Caco-2 (cell line): ENCODE measurements at regions of chr7 and their contacts with region 1.

Region 1: DNA sequence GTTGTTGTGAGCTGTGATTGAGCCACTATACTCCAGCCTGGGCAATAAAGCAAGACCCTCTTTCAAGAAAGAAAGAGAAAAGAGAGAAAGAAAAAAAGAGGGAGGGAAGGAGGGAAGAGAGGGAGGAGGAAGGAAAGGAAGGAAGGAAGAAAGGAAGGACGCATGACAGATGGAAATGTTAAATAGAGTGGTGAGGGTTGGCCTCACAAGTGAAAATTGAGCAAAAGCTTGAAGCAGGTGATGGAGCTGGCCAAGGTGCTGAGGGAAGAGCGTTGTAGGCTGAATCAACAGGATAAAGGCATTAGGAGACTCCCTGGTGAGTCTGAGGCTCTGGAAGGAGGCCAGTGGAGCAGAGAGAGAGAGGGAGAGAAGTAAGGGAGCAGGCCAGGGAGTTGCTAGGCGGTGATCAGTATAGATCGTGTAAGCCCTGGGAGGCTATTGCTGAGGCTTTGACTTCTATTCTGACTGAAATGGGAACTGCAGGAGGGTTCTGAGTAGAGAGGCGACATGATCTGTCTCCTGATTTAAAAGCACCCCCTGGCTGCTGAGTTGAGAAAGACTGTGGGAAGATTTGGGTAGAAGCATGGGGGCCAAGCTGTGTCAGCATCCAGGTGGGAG is 26.5 kb upstream of the TMEM248 start:
- DNase-seq: peak in 1 of 2 experiments; percentile 44
- H3K4me3 ChIP-seq: no peak overlapping the region
- H3K4me3 Mint-ChIP-seq: no peak overlapping the region
- H3K27ac Mint-ChIP-seq: no peak overlapping the region
- H3K4me1 ChIP-seq: no peaks in the 10 kb centered on the region
- H3K4me1 Mint-ChIP-seq: no peaks in the 10 kb centered on the region
- H3K27me3 ChIP-seq: no peaks in the 10 kb centered on the region
- H3K27me3 Mint-ChIP-seq: no peaks in the 10 kb centered on the region
- CTCF ChIP-seq: peak in 1 of 2 experiments; percentile 30

Region 2: DNA sequence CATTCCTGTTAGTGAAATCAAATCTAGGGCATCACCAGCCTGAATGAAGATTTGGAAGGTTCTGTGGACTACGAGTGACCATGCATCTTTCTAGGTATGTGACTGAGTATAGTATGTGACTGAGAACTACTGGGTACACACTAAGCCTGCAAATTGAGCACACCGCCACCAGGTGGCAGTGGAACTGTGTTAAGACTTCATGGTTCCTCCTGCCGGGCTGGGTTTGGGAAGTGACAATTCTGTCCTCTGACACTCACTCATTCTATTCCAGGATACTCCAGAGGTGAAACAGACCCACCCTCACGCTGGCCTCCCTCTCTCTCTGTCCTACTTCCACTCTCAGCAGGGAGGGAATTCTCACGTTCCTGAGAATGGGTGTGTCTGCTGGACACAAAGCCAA is 57.6 kb before region 1 on chr7:
- CTCF ChIA-PET with region 1: no interaction called
- POLR2A ChIA-PET with region 1: no interaction called
- intact Hi-C with region 1: loop called (anchors 1 kb)
- DNase-seq: peak; percentile 54 to 61
- H3K4me3 ChIP-seq: no peak overlapping the region
- H3K4me3 Mint-ChIP-seq: no peak overlapping the region
- H3K27ac Mint-ChIP-seq: no peak overlapping the region
- H3K4me1 ChIP-seq: no peaks in the 10 kb centered on the region
- H3K4me1 Mint-ChIP-seq: no peaks in the 10 kb centered on the region
- H3K27me3 ChIP-seq: no peaks in the 10 kb centered on the region
- H3K27me3 Mint-ChIP-seq: no peaks in the 10 kb centered on the region
- CTCF ChIP-seq: peak; percentile 49 to 59